ENCODE measurements at regions of chr4 and their contacts with region 1.

Region 1: GRCh38 chr4:77862478-77863216 is at the start of gene MRPL1:
- DNase-seq: peak; percentile 81 to 92 (median 91)
- H3K4me3 ChIP-seq: peak within 1 kb of the TSS; percentile 89
- H3K4me3 Mint-ChIP-seq: peak within 1 kb of the TSS; percentile 92 to 97 (median 96)
- H3K27ac ChIP-seq: peak within 1 kb of the TSS; percentile 100
- H3K27ac Mint-ChIP-seq: peak within 1 kb of the TSS; percentile 99 to 100 (median 99)
- H3K4me1 ChIP-seq: peaks cover 34% of the 10 kb centered on the region
- H3K4me1 Mint-ChIP-seq: peaks cover 51 to 86% (median 76%) of the 10 kb centered on the region in 3 donors
- H3K27me3 ChIP-seq: no peaks in the 10 kb centered on the region
- H3K27me3 Mint-ChIP-seq: peaks cover 0 to 12% of the 10 kb centered on the region in 2 donors
- total RNA-seq, gene MRPL1: 88.4 to 93.8 TPM

Region 2: DNA sequence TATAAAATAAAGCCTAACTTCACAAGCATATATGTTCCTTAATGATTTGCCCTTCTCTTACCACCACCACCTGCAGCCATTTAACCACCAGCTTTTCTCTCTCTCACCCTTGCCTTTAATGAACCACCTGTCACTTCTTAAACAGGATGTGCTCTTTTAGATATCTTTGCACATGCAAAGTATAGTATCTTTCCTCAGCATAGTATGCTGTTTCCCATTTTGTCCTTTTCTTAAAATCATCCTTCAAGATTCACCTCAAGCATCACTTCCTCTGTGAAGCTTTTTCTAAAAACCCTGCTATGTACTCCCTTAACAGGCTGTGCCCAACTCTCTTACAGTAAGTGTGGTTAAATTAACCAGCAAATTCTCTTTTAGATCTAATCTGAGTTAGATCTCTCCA is 35.3 kb before region 1 on chr4:
- CTCF ChIA-PET with region 1: interaction called, 21 read pairs
- POLR2A ChIA-PET with region 1: interaction called, 394 read pairs
- DNase-seq: peak in 2 of 5 donors; percentile 47 to 53
- H3K4me3 ChIP-seq: peak overlapping the region; percentile 1
- H3K4me3 Mint-ChIP-seq: peak overlapping the region; percentile 2 to 52 (median 25)
- H3K27ac ChIP-seq: no peak overlapping the region
- H3K27ac Mint-ChIP-seq: peak overlapping the region; percentile 43 to 94 (median 76)
- H3K4me1 ChIP-seq: peaks cover 46% of the 10 kb centered on the region
- H3K4me1 Mint-ChIP-seq: peaks cover 44 to 61% (median 60%) of the 10 kb centered on the region in 3 donors
- H3K27me3 ChIP-seq: no peaks in the 10 kb centered on the region
- H3K27me3 Mint-ChIP-seq: no peaks in the 10 kb centered on the region